ENCODE measurements at regions of chr1 and their contacts with region 1.

Region 1: DNA sequence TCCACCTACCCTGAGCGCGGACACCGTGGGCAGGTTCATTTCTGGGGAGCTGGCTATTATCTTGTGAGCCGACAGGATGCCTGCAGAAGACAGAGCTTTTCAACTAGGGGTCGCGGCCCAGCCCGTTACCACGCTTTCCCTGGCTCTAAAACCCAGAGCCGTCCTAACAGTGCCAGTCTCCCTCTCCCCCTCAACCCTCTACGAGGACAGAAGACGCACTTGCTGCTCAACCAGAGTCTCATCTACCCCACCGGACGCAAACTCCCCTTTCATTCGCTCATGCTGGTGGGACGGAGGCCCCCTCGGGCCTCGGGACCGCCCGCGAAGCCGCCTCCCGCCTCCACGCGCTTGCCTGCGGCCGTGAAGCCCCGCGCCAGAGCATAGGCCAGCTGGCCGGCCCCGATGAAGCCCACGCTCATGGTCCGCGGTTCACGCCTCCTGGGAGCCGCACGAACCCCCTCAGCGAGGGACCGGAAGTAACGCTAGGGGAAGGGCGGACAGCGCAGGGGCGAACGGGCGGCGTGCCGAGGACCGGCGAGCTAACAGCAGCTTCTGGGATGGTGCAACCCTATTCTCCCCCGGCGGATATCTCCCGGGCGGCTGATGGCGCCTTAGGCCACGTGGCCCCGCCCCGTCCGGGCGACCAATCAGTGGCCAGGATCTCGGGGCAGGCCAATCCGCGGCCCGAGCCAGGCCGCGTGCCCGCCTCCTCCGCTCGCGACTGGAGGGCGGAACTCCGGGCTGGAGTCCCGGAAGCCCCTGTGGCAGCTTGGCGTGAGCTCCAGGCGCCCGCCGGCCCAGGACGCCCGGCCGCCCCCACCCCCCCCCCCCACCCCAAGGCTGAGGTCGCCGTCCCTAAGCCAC is at the start of gene PYCR2:
- DNase-seq: peak; percentile 94
- H3K4me3 ChIP-seq: peak within 1 kb of the TSS; percentile 69 to 97 (median 75)
- H3K27ac ChIP-seq: peak within 1 kb of the TSS; percentile 69
- H3K4me1 ChIP-seq: peaks cover 40% of the 10 kb centered on the region
- H3K27me3 ChIP-seq: no peaks in the 10 kb centered on the region
- CTCF ChIP-seq: no peak
- total RNA-seq, gene PYCR2: 64.2 to 73.1 TPM

Region 2: DNA sequence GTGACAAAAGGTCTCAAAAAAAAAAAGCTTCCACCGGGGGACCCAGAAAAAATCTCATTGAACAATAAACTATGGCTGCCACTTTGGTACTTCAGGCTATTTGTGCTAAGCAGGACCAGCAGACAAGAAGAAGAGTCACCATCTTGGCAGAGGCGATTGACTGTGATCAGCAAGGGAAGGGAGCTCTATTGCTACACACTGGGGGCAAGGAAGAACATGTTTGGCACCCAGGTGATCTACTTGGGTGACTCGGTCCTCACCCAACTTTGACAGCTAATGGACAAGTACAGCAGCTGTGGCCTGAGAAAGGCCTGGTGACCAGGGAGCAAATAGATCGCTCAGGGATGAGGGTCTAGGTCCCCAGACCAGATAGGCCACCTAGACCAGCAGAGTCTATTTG is 199.7 kb before region 1 on chr1:
- CTCF ChIA-PET with region 1: no interaction called
- dilution Hi-C with region 1: no loop called
- in situ Hi-C with region 1: no loop called
- intact Hi-C with region 1: no loop called
- DNase-seq: no peak
- H3K4me3 ChIP-seq: no peak overlapping the region
- H3K27ac ChIP-seq: no peak overlapping the region
- H3K4me1 ChIP-seq: no peaks in the 10 kb centered on the region
- H3K27me3 ChIP-seq: no peaks in the 10 kb centered on the region
- CTCF ChIP-seq: no peak

Region 3: GRCh38 chr1:225809842-225810578 is 113.9 kb before region 1 on chr1 and contains the start of gene EPHX1:
- CTCF ChIA-PET with region 1: interaction called, 23 read pairs
- dilution Hi-C with region 1: loop called (anchors 5 kb)
- in situ Hi-C with region 1: no loop called
- intact Hi-C with region 1: no loop called
- DNase-seq: peak; percentile 86
- H3K4me3 ChIP-seq: peak within 1 kb of the TSS; percentile 50 to 86 (median 85)
- H3K27ac ChIP-seq: peak within 1 kb of the TSS; percentile 24
- H3K4me1 ChIP-seq: peaks cover 5% of the 10 kb centered on the region
- H3K27me3 ChIP-seq: no peaks in the 10 kb centered on the region
- CTCF ChIP-seq: peak in 1 of 2 donors; percentile 47
- total RNA-seq, gene EPHX1: 22.8 to 32.8 TPM

Region 4: DNA sequence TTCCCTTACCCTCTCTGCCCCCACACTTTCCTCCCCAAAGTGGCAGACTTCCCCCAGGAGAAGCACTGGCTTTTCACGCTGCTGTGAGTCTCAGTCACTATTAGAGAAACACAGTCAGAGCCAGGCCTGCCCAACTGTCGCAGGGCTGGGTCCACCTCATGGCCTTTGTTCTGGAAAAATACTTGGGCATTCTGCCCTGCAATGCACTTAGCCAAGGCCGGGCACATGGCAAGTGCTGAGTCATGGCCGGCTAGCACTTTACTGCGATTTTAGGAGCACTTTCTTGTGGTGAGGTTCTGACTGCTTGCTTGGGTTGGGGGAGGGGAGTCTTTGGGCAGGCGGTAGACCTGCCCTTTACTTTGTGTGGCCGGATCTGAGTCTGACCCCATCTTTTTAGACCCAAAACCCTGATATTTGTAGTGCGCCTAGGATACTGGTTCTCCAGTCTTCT is 106.3 kb before region 1 on chr1:
- CTCF ChIA-PET with region 1: no interaction called
- dilution Hi-C with region 1: loop called (anchors 5 kb)
- in situ Hi-C with region 1: no loop called
- intact Hi-C with region 1: no loop called
- DNase-seq: peak; percentile 75
- H3K4me3 ChIP-seq: no peak overlapping the region
- H3K27ac ChIP-seq: no peak overlapping the region
- H3K4me1 ChIP-seq: peaks cover 16% of the 10 kb centered on the region
- H3K27me3 ChIP-seq: no peaks in the 10 kb centered on the region
- CTCF ChIP-seq: no peak

Region 5: DNA sequence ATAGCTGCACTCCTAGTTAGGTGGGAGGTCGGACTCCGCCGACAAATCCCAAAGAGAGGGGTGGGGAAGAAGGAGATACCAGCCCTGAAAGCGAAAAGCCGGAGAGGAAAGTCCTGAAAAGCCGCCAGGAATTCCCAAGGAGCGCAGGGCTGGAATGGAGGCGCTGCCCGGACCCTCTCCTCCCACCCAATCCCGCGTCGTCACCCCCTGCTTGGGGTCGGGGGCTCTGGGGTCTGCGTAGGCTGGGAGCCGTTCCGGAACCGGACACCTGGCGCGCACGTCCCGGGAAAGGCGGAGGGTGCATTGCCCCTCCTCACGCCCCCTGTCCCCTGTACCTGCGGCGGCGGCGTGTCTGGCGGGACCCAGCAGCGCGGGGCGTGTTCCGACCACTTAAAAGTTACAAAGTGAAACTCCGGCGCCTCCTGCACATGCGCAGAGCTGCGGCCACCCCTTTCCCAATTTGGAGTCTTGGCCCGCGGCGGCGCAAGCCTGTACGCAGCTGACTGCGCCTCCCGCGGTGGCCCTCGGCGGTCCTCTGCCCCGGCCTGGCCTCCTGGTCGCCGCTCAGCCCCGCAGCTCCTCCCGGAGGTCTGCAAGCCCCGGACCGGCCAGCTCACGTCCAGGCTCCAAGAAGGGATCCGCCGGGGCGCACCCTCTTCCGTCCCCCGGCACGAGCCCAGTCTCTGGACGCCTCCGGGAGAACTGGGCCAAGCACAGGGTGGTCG is 41.8 kb before region 1 on chr1 and contains the start of gene TMEM63A:
- CTCF ChIA-PET with region 1: no interaction called
- dilution Hi-C with region 1: loop called (anchors 5 kb)
- in situ Hi-C with region 1: no loop called
- intact Hi-C with region 1: loop called (anchors 2 kb)
- DNase-seq: peak; percentile 66
- H3K4me3 ChIP-seq: peak within 1 kb of the TSS; percentile 74 to 98 (median 83)
- H3K27ac ChIP-seq: peak within 1 kb of the TSS; percentile 46
- H3K4me1 ChIP-seq: peaks cover 24% of the 10 kb centered on the region
- H3K27me3 ChIP-seq: no peaks in the 10 kb centered on the region
- CTCF ChIP-seq: peak in 1 of 2 donors; percentile 40
- total RNA-seq, gene TMEM63A: 25.2 to 37.3 TPM

Measured in mammary epithelial cell (primary cell).